Caco-2 (cell line): ENCODE measurements at regions of chr20 and their contacts with region 1.

Region 1: GRCh38 chr20:54668271-54669039 is 193.1 kb downstream of the DOK5 start:
- DNase-seq: peak in 1 of 2 experiments; percentile 68
- H3K4me3 ChIP-seq: no peak overlapping the region
- H3K4me3 Mint-ChIP-seq: no peak overlapping the region
- H3K27ac Mint-ChIP-seq: no peak overlapping the region
- H3K4me1 ChIP-seq: peaks cover 3% of the 10 kb centered on the region; the same call in 1 of the 2 replicates
- H3K4me1 Mint-ChIP-seq: no peaks in the 10 kb centered on the region
- H3K27me3 ChIP-seq: no peaks in the 10 kb centered on the region
- H3K27me3 Mint-ChIP-seq: no peaks in the 10 kb centered on the region
- CTCF ChIP-seq: peak; percentile 85 to 90

Region 2: GRCh38 chr20:54335299-54335698 is 333.2 kb before region 1 on chr20:
- CTCF ChIA-PET with region 1: no interaction called
- POLR2A ChIA-PET with region 1: no interaction called
- intact Hi-C with region 1: no loop called
- DNase-seq: no peak
- H3K4me3 ChIP-seq: no peak overlapping the region
- H3K4me3 Mint-ChIP-seq: no peak overlapping the region
- H3K27ac Mint-ChIP-seq: no peak overlapping the region
- H3K4me1 ChIP-seq: no peaks in the 10 kb centered on the region
- H3K4me1 Mint-ChIP-seq: no peaks in the 10 kb centered on the region
- H3K27me3 ChIP-seq: no peaks in the 10 kb centered on the region
- H3K27me3 Mint-ChIP-seq: peaks cover 3% of the 10 kb centered on the region
- CTCF ChIP-seq: no peak

Region 3: DNA sequence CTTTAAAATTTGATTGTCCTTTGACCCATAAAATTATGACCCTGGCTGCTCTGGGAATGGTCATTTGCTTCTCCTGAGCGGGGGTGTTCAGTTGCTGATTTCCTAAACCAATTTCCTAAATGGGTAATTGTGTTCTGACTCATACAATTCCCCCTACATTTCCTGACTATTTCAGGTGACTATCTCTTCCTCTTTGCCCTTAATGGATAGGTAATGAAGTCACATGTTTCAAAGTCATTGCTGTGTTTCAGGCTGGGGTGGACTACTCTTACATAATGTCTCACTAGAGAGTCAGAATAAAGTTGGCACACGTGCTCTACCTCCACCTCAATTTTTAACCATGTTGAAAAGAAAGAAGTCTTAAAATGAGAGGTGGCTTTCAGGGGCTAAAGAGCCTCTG is 83.2 kb before region 1 on chr20:
- CTCF ChIA-PET with region 1: no interaction called
- POLR2A ChIA-PET with region 1: no interaction called
- intact Hi-C with region 1: no loop called
- DNase-seq: no peak
- H3K4me3 ChIP-seq: no peak overlapping the region
- H3K4me3 Mint-ChIP-seq: no peak overlapping the region
- H3K27ac Mint-ChIP-seq: no peak overlapping the region
- H3K4me1 ChIP-seq: no peaks in the 10 kb centered on the region
- H3K4me1 Mint-ChIP-seq: no peaks in the 10 kb centered on the region
- H3K27me3 ChIP-seq: no peaks in the 10 kb centered on the region
- H3K27me3 Mint-ChIP-seq: peaks cover 11% of the 10 kb centered on the region
- CTCF ChIP-seq: no peak

Region 4: GRCh38 chr20:54643791-54644190 is 24.7 kb before region 1 on chr20:
- CTCF ChIA-PET with region 1: no interaction called
- POLR2A ChIA-PET with region 1: no interaction called
- intact Hi-C with region 1: no loop called
- DNase-seq: no peak
- H3K4me3 ChIP-seq: no peak overlapping the region
- H3K4me3 Mint-ChIP-seq: no peak overlapping the region
- H3K27ac Mint-ChIP-seq: no peak overlapping the region
- H3K4me1 ChIP-seq: no peaks in the 10 kb centered on the region
- H3K4me1 Mint-ChIP-seq: no peaks in the 10 kb centered on the region
- H3K27me3 ChIP-seq: no peaks in the 10 kb centered on the region
- H3K27me3 Mint-ChIP-seq: peaks cover 5% of the 10 kb centered on the region
- CTCF ChIP-seq: no peak

Region 5: GRCh38 chr20:54657268-54657827 is 11.1 kb before region 1 on chr20:
- CTCF ChIA-PET with region 1: no interaction called
- POLR2A ChIA-PET with region 1: interaction called, 11 read pairs
- intact Hi-C with region 1: no loop called
- DNase-seq: no peak
- H3K4me3 ChIP-seq: no peak overlapping the region
- H3K4me3 Mint-ChIP-seq: no peak overlapping the region
- H3K27ac Mint-ChIP-seq: no peak overlapping the region
- H3K4me1 ChIP-seq: peaks cover 42% of the 10 kb centered on the region
- H3K4me1 Mint-ChIP-seq: peaks cover 30% of the 10 kb centered on the region
- H3K27me3 ChIP-seq: no peaks in the 10 kb centered on the region
- H3K27me3 Mint-ChIP-seq: no peaks in the 10 kb centered on the region
- CTCF ChIP-seq: no peak

Region 6: DNA sequence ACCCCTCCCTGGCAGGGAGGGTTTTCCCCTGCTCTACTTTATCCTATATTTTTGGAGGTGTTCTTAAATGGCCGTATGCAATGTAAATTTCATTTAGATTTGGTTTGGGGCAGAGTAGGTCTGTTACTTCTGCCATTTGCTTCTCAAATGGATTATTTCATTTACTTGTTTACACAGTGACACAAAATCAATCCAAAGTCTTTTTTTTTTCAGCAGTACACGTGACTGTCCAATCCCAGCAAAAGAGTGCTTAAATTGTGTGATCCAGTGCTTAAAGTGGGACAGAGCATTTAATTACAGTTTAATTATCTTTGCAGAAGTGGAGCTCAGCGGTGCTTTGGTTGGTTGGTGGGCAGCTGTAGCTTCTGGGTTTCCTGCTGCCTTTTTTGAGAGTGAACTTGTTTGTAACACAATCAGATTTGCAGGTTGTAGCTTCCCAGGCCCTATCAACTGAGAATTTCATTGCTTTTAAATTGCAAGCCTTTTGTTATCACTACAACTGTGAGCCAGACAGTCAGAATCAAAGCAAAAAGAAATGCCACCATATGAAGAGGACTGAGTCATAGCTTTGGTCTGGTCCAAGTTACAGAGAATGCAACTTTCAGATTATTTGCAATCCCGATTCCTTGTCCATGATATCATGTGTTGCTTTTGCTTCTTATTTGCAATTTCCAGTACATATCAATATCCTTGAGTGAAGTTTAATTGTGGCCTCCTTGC is 23.9 kb after region 1 on chr20:
- CTCF ChIA-PET with region 1: no interaction called
- POLR2A ChIA-PET with region 1: no interaction called
- intact Hi-C with region 1: no loop called
- DNase-seq: no peak
- H3K4me3 ChIP-seq: no peak overlapping the region
- H3K4me3 Mint-ChIP-seq: no peak overlapping the region
- H3K27ac Mint-ChIP-seq: no peak overlapping the region
- H3K4me1 ChIP-seq: no peaks in the 10 kb centered on the region
- H3K4me1 Mint-ChIP-seq: no peaks in the 10 kb centered on the region
- H3K27me3 ChIP-seq: no peaks in the 10 kb centered on the region
- H3K27me3 Mint-ChIP-seq: peaks cover 19% of the 10 kb centered on the region
- CTCF ChIP-seq: no peak

Region 7: GRCh38 chr20:54726768-54727422 is 58.4 kb after region 1 on chr20:
- CTCF ChIA-PET with region 1: interaction called, 3 read pairs
- POLR2A ChIA-PET with region 1: no interaction called
- intact Hi-C with region 1: loop called (anchors 1 kb)
- DNase-seq: peak in 1 of 2 experiments; percentile 55
- H3K4me3 ChIP-seq: no peak overlapping the region
- H3K4me3 Mint-ChIP-seq: no peak overlapping the region
- H3K27ac Mint-ChIP-seq: no peak overlapping the region
- H3K4me1 ChIP-seq: no peaks in the 10 kb centered on the region
- H3K4me1 Mint-ChIP-seq: no peaks in the 10 kb centered on the region
- H3K27me3 ChIP-seq: no peaks in the 10 kb centered on the region
- H3K27me3 Mint-ChIP-seq: peaks cover 19% of the 10 kb centered on the region
- CTCF ChIP-seq: peak; percentile 52 to 67